GM12878 (cell line): ENCODE measurements at regions of chr9 and their contacts with region 1.

Region 1: GRCh38 chr9:83334320-83334719 is 203.9 kb downstream of the FRMD3 start:
- DNase-seq: peak; percentile 11
- ATAC-seq: peak; percentile 96
- H3K4me3 ChIP-seq: no peak overlapping the region
- H3K27ac ChIP-seq: no peak overlapping the region
- H3K4me1 ChIP-seq: no peaks in the 10 kb centered on the region
- H3K27me3 ChIP-seq: no peaks in the 10 kb centered on the region
- CTCF ChIP-seq: peak; percentile 86 to 87 (median 86)
- EP300 ChIP-seq: no peak
- POLR2A ChIP-seq: no peak
- RAD21 ChIP-seq: peak; percentile 95

Region 2: GRCh38 chr9:83218456-83219090 is 115.7 kb before region 1 on chr9:
- CTCF ChIA-PET with region 1: no interaction called
- POLR2A ChIA-PET with region 1: no interaction called
- RAD21 ChIA-PET with region 1: no interaction called
- SMC1A ChIA-PET with region 1: no interaction called
- in situ Hi-C with region 1: no loop called
- intact Hi-C with region 1: no loop called
- DNase-seq: no peak
- ATAC-seq: no peak
- H3K4me3 ChIP-seq: no peak overlapping the region
- H3K27ac ChIP-seq: no peak overlapping the region
- H3K4me1 ChIP-seq: no peaks in the 10 kb centered on the region
- H3K27me3 ChIP-seq: peaks cover 0 to 3% of the 10 kb centered on the region in 2 experiments; a peak in 1 of 4 replicates
- CTCF ChIP-seq: no peak
- EP300 ChIP-seq: no peak
- POLR2A ChIP-seq: no peak
- RAD21 ChIP-seq: no peak

Region 3: DNA sequence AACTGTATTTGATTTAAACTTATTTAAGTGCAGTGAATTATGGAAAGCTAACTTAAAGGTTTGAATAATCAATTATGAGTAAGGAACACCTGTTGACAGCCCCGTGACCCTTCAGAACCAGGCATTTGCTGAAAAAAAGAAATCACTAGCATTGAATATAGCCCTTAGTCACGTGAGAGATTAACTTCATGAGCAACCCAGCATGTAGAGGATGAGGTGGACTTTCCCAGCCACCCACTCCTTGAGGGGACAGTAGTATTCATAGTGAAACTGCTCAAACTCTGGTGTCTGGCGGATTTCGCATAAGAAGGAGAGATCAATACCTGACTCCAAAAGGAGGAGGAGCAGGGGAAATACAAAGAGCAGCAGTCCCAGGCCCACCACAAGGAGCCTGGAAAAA is 86.6 kb before region 1 on chr9:
- CTCF ChIA-PET with region 1: no interaction called
- POLR2A ChIA-PET with region 1: no interaction called
- RAD21 ChIA-PET with region 1: no interaction called
- SMC1A ChIA-PET with region 1: no interaction called
- in situ Hi-C with region 1: no loop called
- intact Hi-C with region 1: no loop called
- DNase-seq: peak; percentile 15
- ATAC-seq: peak; percentile 85
- H3K4me3 ChIP-seq: no peak overlapping the region
- H3K27ac ChIP-seq: no peak overlapping the region
- H3K4me1 ChIP-seq: no peaks in the 10 kb centered on the region
- H3K27me3 ChIP-seq: no peaks in the 10 kb centered on the region
- CTCF ChIP-seq: no peak
- EP300 ChIP-seq: no peak
- POLR2A ChIP-seq: no peak
- RAD21 ChIP-seq: no peak

Region 4: GRCh38 chr9:83526901-83527300 is 192.6 kb after region 1 on chr9:
- CTCF ChIA-PET with region 1: interaction called, 21 read pairs
- POLR2A ChIA-PET with region 1: interaction called, 4 read pairs
- RAD21 ChIA-PET with region 1: interaction called, 3 read pairs
- SMC1A ChIA-PET with region 1: interaction called, 9 read pairs
- in situ Hi-C with region 1: no loop called
- intact Hi-C with region 1: no loop called
- DNase-seq: no peak
- ATAC-seq: no peak
- H3K4me3 ChIP-seq: no peak overlapping the region
- H3K27ac ChIP-seq: no peak overlapping the region
- H3K4me1 ChIP-seq: no peaks in the 10 kb centered on the region
- H3K27me3 ChIP-seq: no peaks in the 10 kb centered on the region
- CTCF ChIP-seq: no peak
- EP300 ChIP-seq: no peak
- POLR2A ChIP-seq: no peak
- RAD21 ChIP-seq: no peak

Region 5: DNA sequence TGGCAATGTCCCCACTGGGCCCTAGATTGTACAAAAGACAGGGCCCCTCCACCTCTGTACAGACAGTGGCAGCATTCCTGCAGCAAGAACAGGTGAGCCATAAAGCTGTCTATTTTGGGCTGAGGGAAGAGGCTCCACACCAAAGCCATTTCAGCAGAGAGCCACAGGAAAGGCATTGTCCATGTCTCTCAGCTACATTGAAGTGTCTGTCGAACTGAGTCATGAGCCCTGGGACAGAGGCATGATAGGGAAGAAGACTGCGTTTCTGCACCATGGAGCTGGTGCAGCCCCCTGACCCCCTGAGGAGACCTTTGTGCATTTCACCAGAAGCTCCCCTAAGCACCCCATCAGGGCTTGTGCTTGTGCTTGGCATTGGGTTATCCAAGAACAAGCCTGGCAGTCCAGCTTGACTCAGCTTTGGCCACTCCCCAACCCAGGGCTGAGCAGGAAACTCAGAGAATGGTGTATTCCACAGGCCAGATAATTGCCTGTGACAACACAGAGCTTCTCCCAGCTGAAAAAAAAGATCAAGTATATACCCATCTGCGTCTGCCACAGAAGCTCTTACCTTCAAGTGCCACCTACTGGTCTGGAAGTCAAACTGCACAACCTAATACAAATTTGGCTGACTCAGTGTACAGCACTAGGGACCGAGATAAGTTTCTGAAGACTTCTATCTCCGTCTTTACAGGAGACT is 209.8 kb after region 1 on chr9:
- CTCF ChIA-PET with region 1: interaction called, 401 read pairs
- POLR2A ChIA-PET with region 1: interaction called, 6 read pairs
- RAD21 ChIA-PET with region 1: interaction called, 211 read pairs
- SMC1A ChIA-PET with region 1: interaction called, 198 read pairs
- in situ Hi-C with region 1: loop called (anchors 5 kb)
- intact Hi-C with region 1: loop called (anchors 1 kb)
- DNase-seq: peak; percentile 8
- ATAC-seq: peak; percentile 99
- H3K4me3 ChIP-seq: no peak overlapping the region
- H3K27ac ChIP-seq: no peak overlapping the region
- H3K4me1 ChIP-seq: no peaks in the 10 kb centered on the region
- H3K27me3 ChIP-seq: no peaks in the 10 kb centered on the region
- CTCF ChIP-seq: peak; percentile 72 to 87 (median 82)
- EP300 ChIP-seq: no peak
- POLR2A ChIP-seq: no peak
- RAD21 ChIP-seq: peak; percentile 85

Region 6: GRCh38 chr9:83596896-83597504 is 262.7 kb after region 1 on chr9:
- CTCF ChIA-PET with region 1: interaction called, 59 read pairs
- POLR2A ChIA-PET with region 1: interaction called, 3 read pairs
- RAD21 ChIA-PET with region 1: interaction called, 7 read pairs
- SMC1A ChIA-PET with region 1: interaction called, 28 read pairs
- in situ Hi-C with region 1: loop called (anchors 5 kb)
- intact Hi-C with region 1: loop called (anchors 1 kb)
- DNase-seq: no peak
- ATAC-seq: peak; percentile 92
- H3K4me3 ChIP-seq: no peak overlapping the region
- H3K27ac ChIP-seq: no peak overlapping the region
- H3K4me1 ChIP-seq: no peaks in the 10 kb centered on the region
- H3K27me3 ChIP-seq: no peaks in the 10 kb centered on the region
- CTCF ChIP-seq: peak; percentile 69 to 78 (median 71)
- EP300 ChIP-seq: no peak
- POLR2A ChIP-seq: no peak
- RAD21 ChIP-seq: peak; percentile 70

Region 7: DNA sequence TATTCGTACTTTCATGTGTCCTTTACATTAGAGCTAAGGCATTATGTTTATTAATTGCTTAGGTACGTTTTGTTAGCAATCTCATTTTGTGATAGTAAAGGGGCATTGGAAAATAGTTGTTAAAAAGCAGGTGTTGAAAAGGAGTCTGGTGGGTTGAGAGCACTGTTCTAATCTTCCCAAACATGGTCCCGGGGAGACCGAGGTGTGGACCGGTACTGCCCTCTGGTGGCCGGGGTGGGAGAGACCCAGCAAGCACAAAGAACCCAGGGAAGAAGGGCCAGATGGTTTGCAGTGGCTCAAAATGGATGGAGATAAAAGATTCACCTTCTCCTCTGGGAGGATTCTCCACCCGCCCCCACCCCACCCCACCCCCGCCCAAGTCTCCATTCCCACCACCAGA is 314.8 kb after region 1 on chr9:
- CTCF ChIA-PET with region 1: interaction called, 17 read pairs
- POLR2A ChIA-PET with region 1: no interaction called
- RAD21 ChIA-PET with region 1: interaction called, 12 read pairs
- SMC1A ChIA-PET with region 1: interaction called, 3 read pairs
- in situ Hi-C with region 1: no loop called
- intact Hi-C with region 1: no loop called
- DNase-seq: no peak
- ATAC-seq: peak; percentile 94
- H3K4me3 ChIP-seq: no peak overlapping the region
- H3K27ac ChIP-seq: no peak overlapping the region
- H3K4me1 ChIP-seq: peaks cover 5% of the 10 kb centered on the region
- H3K27me3 ChIP-seq: no peaks in the 10 kb centered on the region
- CTCF ChIP-seq: peak; percentile 65 to 78 (median 73)
- EP300 ChIP-seq: no peak
- POLR2A ChIP-seq: no peak
- RAD21 ChIP-seq: peak; percentile 63